HCT116 (cell line): ENCODE measurements at regions of chr19 and their contacts with region 1.

Region 1: GRCh38 chr19:12564016-12564664 is 12.9 kb upstream of the ZNF564 start:
- DNase-seq: peak; percentile 74
- ATAC-seq: peak; percentile 95
- H3K4me3 ChIP-seq: no peak overlapping the region
- H3K27ac ChIP-seq: no peak overlapping the region
- H3K4me1 ChIP-seq: peaks cover 0 to 5% of the 10 kb centered on the region in 2 experiments; a peak in 1 of 4 replicates
- H3K27me3 ChIP-seq: no peaks in the 10 kb centered on the region
- CTCF ChIP-seq: peak; percentile 72 to 98 (median 97); a peak in 5 of 6 replicates
- POLR2A ChIP-seq: no peak
- RAD21 ChIP-seq: peak; percentile 90

Region 2: GRCh38 chr19:12551060-12551832 is 12.9 kb before region 1 on chr19 and contains the start of gene ZNF564:
- CTCF ChIA-PET with region 1: no interaction called
- POLR2A ChIA-PET with region 1: no interaction called
- RAD21 ChIA-PET with region 1: no interaction called
- intact Hi-C with region 1: no loop called
- DNase-seq: peak; percentile 98
- ATAC-seq: peak; percentile 97
- H3K4me3 ChIP-seq: peak within 1 kb of the TSS; percentile 86 to 90
- H3K27ac ChIP-seq: peak within 1 kb of the TSS; percentile 89
- H3K4me1 ChIP-seq: peaks cover 8 to 13% of the 10 kb centered on the region in 2 experiments
- H3K27me3 ChIP-seq: no peaks in the 10 kb centered on the region
- CTCF ChIP-seq: no peak
- POLR2A ChIP-seq: peak; percentile 65
- RAD21 ChIP-seq: no peak
- total RNA-seq, gene ZNF564: 6.1 TPM

Region 3: GRCh38 chr19:12623361-12624022 is 59.4 kb after region 1 on chr19:
- CTCF ChIA-PET with region 1: no interaction called
- POLR2A ChIA-PET with region 1: no interaction called
- RAD21 ChIA-PET with region 1: no interaction called
- intact Hi-C with region 1: no loop called
- DNase-seq: no peak
- ATAC-seq: no peak
- H3K4me3 ChIP-seq: no peak overlapping the region
- H3K27ac ChIP-seq: no peak overlapping the region
- H3K4me1 ChIP-seq: no peaks in the 10 kb centered on the region
- H3K27me3 ChIP-seq: no peaks in the 10 kb centered on the region
- CTCF ChIP-seq: no peak
- POLR2A ChIP-seq: no peak
- RAD21 ChIP-seq: no peak

Region 4: DNA sequence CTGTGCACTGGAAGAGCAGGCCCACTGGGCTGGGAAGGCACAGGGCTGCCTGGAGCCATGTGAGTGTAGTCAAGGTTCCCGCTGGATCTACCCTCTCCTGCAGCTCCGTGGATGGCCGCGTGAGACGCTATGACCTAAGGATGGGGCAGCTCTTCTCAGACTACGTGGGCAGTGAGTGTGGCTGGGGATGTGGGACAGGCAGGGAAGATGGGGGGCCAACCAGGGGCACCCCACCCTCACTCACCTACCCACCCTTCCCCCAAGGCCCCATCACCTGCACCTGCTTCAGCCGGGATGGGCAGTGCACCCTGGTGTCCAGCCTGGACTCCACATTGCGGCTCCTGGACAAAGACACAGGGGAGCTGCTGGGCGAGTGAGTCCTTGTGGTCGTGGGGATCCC is 108.6 kb after region 1 on chr19:
- CTCF ChIA-PET with region 1: no interaction called
- POLR2A ChIA-PET with region 1: no interaction called
- RAD21 ChIA-PET with region 1: interaction called in 1 of 2 experiments, 3 read pairs
- intact Hi-C with region 1: loop called (anchors 1 kb)
- DNase-seq: no peak
- ATAC-seq: no peak
- H3K4me3 ChIP-seq: no peak overlapping the region
- H3K27ac ChIP-seq: no peak overlapping the region
- H3K4me1 ChIP-seq: peaks cover 14 to 27% of the 10 kb centered on the region in 2 experiments
- H3K27me3 ChIP-seq: no peaks in the 10 kb centered on the region
- CTCF ChIP-seq: no peak
- POLR2A ChIP-seq: no peak
- RAD21 ChIP-seq: no peak